WTC11 (cell line): ENCODE measurements at regions of chr3 and their contacts with region 1.

Region 1: GRCh38 chr3:124761250-124761796 is 31.1 kb downstream of the UMPS start:
- DNase-seq: peak; percentile 80
- ATAC-seq: peak; percentile 55
- H3K4me3 Mint-ChIP-seq: no peak overlapping the region
- H3K27ac Mint-ChIP-seq: peak overlapping the region; percentile 47
- H3K4me1 Mint-ChIP-seq: peaks cover 45% of the 10 kb centered on the region
- H3K27me3 Mint-ChIP-seq: no peaks in the 10 kb centered on the region
- CTCF ChIP-seq: peak; percentile 87

Region 2: DNA sequence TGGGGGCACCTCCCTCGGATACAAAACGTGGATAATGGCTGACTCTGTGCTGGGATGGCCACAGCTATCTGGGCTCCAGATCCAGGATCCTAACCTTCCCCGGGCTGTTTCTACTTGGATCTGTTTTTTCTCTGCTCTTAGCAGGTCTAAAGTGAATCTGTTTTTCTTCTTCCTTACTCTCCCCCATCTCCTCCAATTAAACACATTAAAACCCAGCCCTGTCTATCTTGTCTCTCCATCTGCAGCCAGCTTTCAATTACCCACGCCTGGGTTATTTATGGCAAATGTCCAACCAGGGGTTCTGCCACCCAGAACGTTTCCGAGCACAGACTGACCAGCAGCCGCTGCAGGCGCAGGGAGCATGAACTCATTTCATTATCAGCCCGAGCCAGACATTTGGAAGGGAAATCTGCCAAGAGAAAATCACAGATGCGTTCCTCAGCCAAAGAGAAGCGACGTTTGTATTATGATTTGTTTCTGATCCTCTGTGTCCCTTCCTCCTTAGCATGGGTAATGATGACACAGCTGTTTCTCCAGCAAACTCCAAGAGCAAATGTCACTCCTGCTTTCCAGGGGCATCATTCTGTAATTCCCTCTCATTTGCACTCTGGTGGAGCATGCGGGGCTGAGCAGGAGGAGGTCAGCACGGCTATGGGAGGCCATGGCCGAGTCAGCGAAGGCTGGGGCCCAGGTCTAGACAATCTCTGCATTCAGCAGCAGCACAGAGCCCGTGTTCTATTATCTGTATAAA is 10.9 kb after region 1 on chr3:
- CTCF ChIA-PET with region 1: interaction called, 23 read pairs
- POLR2A ChIA-PET with region 1: interaction called, 3 read pairs
- DNase-seq: no peak
- ATAC-seq: no peak
- H3K4me3 Mint-ChIP-seq: no peak overlapping the region
- H3K27ac Mint-ChIP-seq: peak overlapping the region; percentile 57
- H3K4me1 Mint-ChIP-seq: peaks cover 32% of the 10 kb centered on the region
- H3K27me3 Mint-ChIP-seq: no peaks in the 10 kb centered on the region
- CTCF ChIP-seq: no peak

Region 3: GRCh38 chr3:124883766-124884473 is 122.6 kb after region 1 on chr3:
- CTCF ChIA-PET with region 1: interaction called, 20 read pairs
- POLR2A ChIA-PET with region 1: no interaction called
- DNase-seq: no peak
- ATAC-seq: no peak
- H3K4me3 Mint-ChIP-seq: peak overlapping the region; percentile 88
- H3K27ac Mint-ChIP-seq: peak overlapping the region; percentile 97
- H3K4me1 Mint-ChIP-seq: peaks cover 68% of the 10 kb centered on the region
- H3K27me3 Mint-ChIP-seq: no peaks in the 10 kb centered on the region
- CTCF ChIP-seq: no peak

Region 4: DNA sequence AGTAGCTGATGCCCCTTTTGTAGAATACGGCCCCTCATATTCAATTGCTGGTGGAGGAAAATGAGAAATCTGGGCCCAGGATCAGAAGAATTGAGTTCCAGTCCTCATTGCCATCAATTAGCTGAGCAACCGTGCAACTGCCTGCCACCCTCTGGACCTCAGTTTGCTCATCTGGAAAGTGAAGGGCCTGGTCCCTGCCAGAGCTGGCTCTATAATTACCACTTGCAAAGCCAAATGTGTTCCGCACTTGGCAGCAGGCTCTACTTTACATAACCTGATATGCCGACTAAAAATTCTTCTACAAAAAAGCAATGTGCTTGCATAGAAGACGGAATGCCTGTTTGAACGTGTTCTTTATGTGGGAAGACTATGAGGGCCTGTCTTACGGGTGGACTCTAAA is 134.4 kb after region 1 on chr3:
- CTCF ChIA-PET with region 1: interaction called, 51 read pairs
- POLR2A ChIA-PET with region 1: no interaction called
- DNase-seq: no peak
- ATAC-seq: no peak
- H3K4me3 Mint-ChIP-seq: no peak overlapping the region
- H3K27ac Mint-ChIP-seq: no peak overlapping the region
- H3K4me1 Mint-ChIP-seq: peaks cover 21% of the 10 kb centered on the region
- H3K27me3 Mint-ChIP-seq: no peaks in the 10 kb centered on the region
- CTCF ChIP-seq: no peak

Region 5: DNA sequence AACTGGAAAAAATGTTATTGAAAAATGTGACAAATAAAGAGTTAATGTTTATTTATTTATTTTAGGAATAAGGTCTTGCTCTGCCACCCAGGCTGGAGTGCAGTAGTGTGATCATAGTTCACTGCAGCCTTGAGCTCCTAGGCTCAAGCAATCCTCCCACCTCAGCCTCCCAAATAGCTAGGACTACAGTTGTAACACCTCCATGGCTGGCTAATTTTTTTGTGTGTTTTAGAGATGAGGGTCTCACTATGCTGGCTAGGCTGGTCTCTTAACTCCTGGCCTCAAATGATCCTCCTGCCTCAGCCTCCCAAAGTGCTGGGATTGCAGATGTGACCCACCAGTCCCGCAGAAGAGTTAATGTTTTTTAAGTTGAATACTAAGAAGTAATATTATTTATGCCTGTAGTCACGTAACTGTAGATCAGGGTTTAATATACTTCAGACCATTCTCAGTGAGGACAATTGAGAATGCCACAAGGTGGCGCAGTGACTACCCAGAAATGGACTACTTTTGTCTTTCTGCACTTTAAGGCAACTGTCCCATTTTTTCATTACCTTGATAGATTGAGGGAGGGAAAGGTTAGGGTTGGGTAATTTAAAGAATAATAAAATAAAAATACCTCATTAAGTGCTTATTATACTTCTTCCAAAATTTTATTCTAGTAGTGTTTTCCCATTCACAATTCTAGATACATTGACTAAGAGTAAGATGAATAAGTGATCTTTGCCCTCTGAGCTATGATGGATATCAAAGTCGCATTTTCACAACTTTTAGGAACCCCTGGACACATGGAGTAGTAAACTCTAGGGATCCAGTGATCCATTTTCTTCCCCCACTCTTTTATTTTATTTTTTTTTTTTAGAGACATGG is 167.2 kb after region 1 on chr3:
- CTCF ChIA-PET with region 1: interaction called, 13 read pairs
- POLR2A ChIA-PET with region 1: no interaction called
- DNase-seq: peak; percentile 58
- ATAC-seq: peak; percentile 53; the same call in 1 of the 2 replicates
- H3K4me3 Mint-ChIP-seq: no peak overlapping the region
- H3K27ac Mint-ChIP-seq: no peak overlapping the region
- H3K4me1 Mint-ChIP-seq: no peaks in the 10 kb centered on the region
- H3K27me3 Mint-ChIP-seq: no peaks in the 10 kb centered on the region
- CTCF ChIP-seq: peak; percentile 59